HepG2 (cell line): ENCODE measurements at regions of chr20 and their contacts with region 1.

Region 1: GRCh38 chr20:62668441-62669027 is 26.2 kb downstream of the SLCO4A1 start:
- DNase-seq: peak; percentile 82
- ATAC-seq: peak; percentile 41
- H3K4me3 ChIP-seq: peak overlapping the region in 2 of 3 experiments; percentile 44 to 59; a peak in 3 of 6 replicates
- H3K27ac ChIP-seq: no peak overlapping the region
- H3K4me1 ChIP-seq: peaks cover 61% of the 10 kb centered on the region
- H3K27me3 ChIP-seq: no peaks in the 10 kb centered on the region
- CTCF ChIP-seq: peak; percentile 98
- EP300 ChIP-seq: no peak
- POLR2A ChIP-seq: no peak; a peak in 1 of 4 replicates
- RAD21 ChIP-seq: peak; percentile 93

Region 2: GRCh38 chr20:62623488-62624324 is 44.8 kb before region 1 on chr20:
- CTCF ChIA-PET with region 1: no interaction called
- POLR2A ChIA-PET with region 1: interaction called, 34 read pairs
- in situ Hi-C with region 1: no loop called
- intact Hi-C with region 1: loop called (anchors 1 kb)
- DNase-seq: peak; percentile 98
- ATAC-seq: peak; percentile 87
- H3K4me3 ChIP-seq: peak overlapping the region; percentile 31 to 65 (median 37); a peak in 5 of 6 replicates
- H3K27ac ChIP-seq: peak overlapping the region; percentile 95
- H3K4me1 ChIP-seq: peaks cover 68% of the 10 kb centered on the region
- H3K27me3 ChIP-seq: peaks cover 2 to 8% of the 10 kb centered on the region in 2 experiments; a peak in 3 of 5 replicates
- CTCF ChIP-seq: peak; percentile 6; the same call in 1 of the 2 replicates
- EP300 ChIP-seq: peak; percentile 16 to 83; a peak in 3 of 4 replicates
- POLR2A ChIP-seq: peak in 1 of 2 experiments; percentile 82; a peak in 2 of 4 replicates
- RAD21 ChIP-seq: no peak

Region 3: GRCh38 chr20:62636446-62636845 is 32.1 kb before region 1 on chr20:
- CTCF ChIA-PET with region 1: no interaction called
- POLR2A ChIA-PET with region 1: interaction called, 20 read pairs
- in situ Hi-C with region 1: no loop called
- intact Hi-C with region 1: no loop called
- DNase-seq: no peak
- ATAC-seq: no peak
- H3K4me3 ChIP-seq: no peak overlapping the region
- H3K27ac ChIP-seq: no peak overlapping the region
- H3K4me1 ChIP-seq: peaks cover 99% of the 10 kb centered on the region
- H3K27me3 ChIP-seq: peaks cover 24 to 69% of the 10 kb centered on the region in 2 experiments
- CTCF ChIP-seq: no peak
- EP300 ChIP-seq: no peak
- POLR2A ChIP-seq: no peak
- RAD21 ChIP-seq: no peak

Region 4: DNA sequence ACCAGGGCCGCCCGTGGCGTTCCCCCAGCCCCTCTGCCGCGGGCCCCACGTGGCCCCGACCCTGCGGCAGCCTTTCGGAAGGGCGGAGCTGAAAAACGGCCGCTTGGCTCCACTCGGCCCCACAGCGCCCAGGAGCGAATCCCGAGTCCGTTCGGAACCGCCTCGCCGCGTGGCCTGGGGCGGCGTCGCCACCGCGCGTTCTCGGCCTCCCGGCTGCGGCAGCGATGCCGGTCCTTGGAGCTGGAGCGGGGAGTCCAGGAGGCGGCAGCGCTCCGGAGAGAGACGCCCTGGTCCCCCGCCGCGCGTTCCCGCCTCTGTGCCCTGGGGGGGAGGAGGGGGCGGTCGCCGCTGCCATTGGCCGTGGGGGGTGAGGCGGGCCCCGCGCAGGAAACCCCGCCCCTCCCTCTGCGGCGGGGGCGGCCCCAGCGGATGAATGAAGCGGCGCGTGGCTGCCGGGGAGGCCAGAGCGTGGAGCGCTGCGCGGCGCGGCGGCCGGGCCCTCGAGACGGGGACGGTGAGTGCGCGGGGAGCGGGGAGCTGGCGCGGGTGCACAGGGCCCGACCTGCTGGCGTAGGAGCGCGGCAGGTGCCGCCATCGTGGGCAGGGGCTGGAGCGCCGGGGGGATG is 26.4 kb before region 1 on chr20 and contains the start of gene SLCO4A1:
- CTCF ChIA-PET with region 1: no interaction called
- POLR2A ChIA-PET with region 1: interaction called, 20 read pairs
- in situ Hi-C with region 1: no loop called
- intact Hi-C with region 1: no loop called
- DNase-seq: peak; percentile 59
- ATAC-seq: peak; percentile 71
- H3K4me3 ChIP-seq: peak within 1 kb of the TSS; percentile 67 to 86 (median 72)
- H3K27ac ChIP-seq: peak within 1 kb of the TSS; percentile 9
- H3K4me1 ChIP-seq: peaks cover 87% of the 10 kb centered on the region
- H3K27me3 ChIP-seq: peaks cover 11 to 13% of the 10 kb centered on the region in 2 experiments
- CTCF ChIP-seq: peak; percentile 53; the same call in 1 of the 2 replicates
- EP300 ChIP-seq: peak in 1 of 2 experiments; percentile 35; a peak in 1 of 4 replicates
- POLR2A ChIP-seq: peak; percentile 32 to 94; a peak in 2 of 4 replicates
- RAD21 ChIP-seq: no peak; the same call in none of the 2 replicates
- total RNA-seq, gene SLCO4A1: 23.8 and 55.5 TPM in 2 replicates

Region 5: DNA sequence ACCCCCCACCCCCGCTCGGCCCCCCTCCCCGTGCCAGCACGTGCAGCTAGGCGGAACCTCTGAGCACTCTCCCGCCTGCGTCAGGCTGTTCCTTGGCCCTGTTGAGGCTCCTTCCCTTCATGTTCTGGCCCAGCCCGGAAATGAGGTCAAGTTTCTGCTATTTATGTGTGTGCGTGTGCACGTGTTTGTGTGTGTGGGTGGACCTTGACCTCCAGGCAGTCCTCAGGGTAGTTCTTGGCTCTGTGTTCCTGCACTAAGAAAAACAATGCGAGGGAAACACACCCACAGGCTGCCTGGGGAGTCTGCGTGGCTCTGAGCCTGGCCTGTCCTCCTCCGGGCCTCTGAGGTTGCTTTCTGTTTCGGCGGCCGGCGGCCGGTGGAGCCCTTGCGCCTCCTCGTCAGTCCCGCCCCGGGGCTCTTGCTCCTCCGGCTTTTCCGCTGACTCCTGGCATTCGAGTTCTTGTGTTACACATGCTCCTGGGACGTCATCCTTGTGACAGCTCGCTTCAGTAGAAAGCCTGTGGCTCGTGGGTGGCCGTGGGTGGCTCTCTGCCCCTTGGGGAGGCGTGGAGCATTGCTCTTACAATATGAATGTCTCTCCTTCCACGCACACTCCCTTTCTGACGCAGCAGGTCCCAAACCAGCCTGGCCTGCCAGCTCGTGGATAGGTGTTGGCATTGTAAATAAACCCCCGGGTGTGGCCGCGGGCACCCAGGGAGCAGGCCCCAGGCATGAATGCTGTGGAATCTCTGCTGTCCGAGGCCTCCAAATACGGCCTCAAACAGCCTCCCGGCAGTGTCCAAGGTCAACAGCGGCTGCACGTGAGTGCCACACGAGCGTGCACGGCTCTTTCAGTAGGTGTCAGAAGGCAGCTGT is 16.2 kb before region 1 on chr20:
- CTCF ChIA-PET with region 1: no interaction called
- POLR2A ChIA-PET with region 1: interaction called, 36 read pairs
- in situ Hi-C with region 1: no loop called
- intact Hi-C with region 1: loop called (anchors 1 kb)
- DNase-seq: peak; percentile 90
- ATAC-seq: peak; percentile 70
- H3K4me3 ChIP-seq: peak overlapping the region; percentile 2 to 44 (median 17); a peak in 5 of 6 replicates
- H3K27ac ChIP-seq: peak overlapping the region; percentile 78
- H3K4me1 ChIP-seq: peaks cover 33% of the 10 kb centered on the region
- H3K27me3 ChIP-seq: no peaks in the 10 kb centered on the region
- CTCF ChIP-seq: no peak; the same call in 1 of the 2 replicates
- EP300 ChIP-seq: peak; percentile 14 to 84; a peak in 2 of 4 replicates
- POLR2A ChIP-seq: peak in 1 of 2 experiments; percentile 56; a peak in 2 of 4 replicates
- RAD21 ChIP-seq: no peak

Region 6: GRCh38 chr20:62808211-62808865 is 139.8 kb after region 1 on chr20:
- CTCF ChIA-PET with region 1: interaction called, 11 read pairs
- POLR2A ChIA-PET with region 1: interaction called, 15 read pairs
- in situ Hi-C with region 1: no loop called
- intact Hi-C with region 1: loop called (anchors 1 kb)
- DNase-seq: peak; percentile 66
- ATAC-seq: peak; percentile 18
- H3K4me3 ChIP-seq: no peak overlapping the region
- H3K27ac ChIP-seq: no peak overlapping the region
- H3K4me1 ChIP-seq: peaks cover 38% of the 10 kb centered on the region
- H3K27me3 ChIP-seq: no peaks in the 10 kb centered on the region
- CTCF ChIP-seq: peak; percentile 95
- EP300 ChIP-seq: no peak
- POLR2A ChIP-seq: no peak; a peak in 3 of 4 replicates
- RAD21 ChIP-seq: peak; percentile 91